ENCODE measurements at regions of chr16 and their contacts with region 1.

Region 1: DNA sequence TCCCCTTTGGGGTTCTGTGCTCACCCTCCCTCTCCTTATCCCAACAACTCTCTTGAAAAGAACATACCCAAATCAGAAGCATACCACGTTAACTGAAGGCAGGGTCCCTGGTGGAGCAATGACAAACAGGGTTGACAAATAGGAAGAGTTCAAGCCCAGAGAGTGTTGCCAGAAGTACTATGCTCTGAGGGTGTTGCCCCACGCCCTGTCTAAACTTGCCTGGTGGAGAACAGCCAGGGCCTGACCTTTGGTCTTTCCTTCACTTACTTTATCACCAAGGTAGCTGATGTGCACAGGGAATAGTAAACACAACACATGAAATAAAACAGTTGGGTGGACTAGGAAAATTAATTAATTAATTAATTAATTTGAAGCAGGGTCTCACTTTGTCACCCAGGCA is 23.3 kb downstream of the ZNF75A start:
- DNase-seq: no peak
- ATAC-seq: no peak
- H3K4me3 ChIP-seq: no peak overlapping the region
- H3K4me3 Mint-ChIP-seq: no peak overlapping the region
- H3K27ac ChIP-seq: no peak overlapping the region
- H3K27ac Mint-ChIP-seq: no peak overlapping the region
- H3K4me1 ChIP-seq: no peaks in the 10 kb centered on the region
- H3K4me1 Mint-ChIP-seq: no peaks in the 10 kb centered on the region
- H3K27me3 ChIP-seq: no peaks in the 10 kb centered on the region
- H3K27me3 Mint-ChIP-seq: no peaks in the 10 kb centered on the region

Region 2: GRCh38 chr16:3198334-3199072 is 130.1 kb before region 1 on chr16:
- CTCF ChIA-PET with region 1: no interaction called
- POLR2A ChIA-PET with region 1: interaction called in 1 of 2 experiments, 11 read pairs
- DNase-seq: no peak
- ATAC-seq: no peak
- H3K4me3 ChIP-seq: no peak overlapping the region
- H3K4me3 Mint-ChIP-seq: no peak overlapping the region
- H3K27ac ChIP-seq: no peak overlapping the region
- H3K27ac Mint-ChIP-seq: no peak overlapping the region
- H3K4me1 ChIP-seq: no peaks in the 10 kb centered on the region
- H3K4me1 Mint-ChIP-seq: peaks cover 0 to 9% (median 6%) of the 10 kb centered on the region in 3 donors
- H3K27me3 ChIP-seq: peaks cover 4 to 40% of the 10 kb centered on the region in 2 experiments
- H3K27me3 Mint-ChIP-seq: peaks cover 17 to 38% of the 10 kb centered on the region in 2 donors

Region 3: DNA sequence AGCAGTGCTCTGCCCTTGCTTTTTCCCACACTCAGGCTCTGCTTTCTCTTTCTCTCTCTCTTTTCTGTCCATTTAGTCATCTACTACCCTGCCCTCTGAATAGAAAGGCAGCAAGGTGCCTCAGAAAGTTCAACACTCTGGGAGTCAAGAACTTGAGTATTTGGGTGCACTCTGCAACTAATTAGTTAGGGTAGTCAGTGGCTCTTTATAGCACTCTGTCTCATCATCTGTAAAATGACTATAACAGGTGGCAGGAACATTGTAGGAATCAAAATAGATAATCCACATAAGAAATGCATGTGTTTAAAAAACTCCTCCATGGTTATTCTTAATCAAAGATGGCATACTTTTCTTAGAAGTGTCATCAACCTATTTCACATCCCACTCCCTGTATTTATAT is 34.3 kb after region 1 on chr16:
- CTCF ChIA-PET with region 1: interaction called in 1 of 2 experiments, 11 read pairs
- POLR2A ChIA-PET with region 1: no interaction called
- DNase-seq: no peak
- ATAC-seq: no peak
- H3K4me3 ChIP-seq: no peak overlapping the region
- H3K4me3 Mint-ChIP-seq: no peak overlapping the region
- H3K27ac ChIP-seq: no peak overlapping the region
- H3K27ac Mint-ChIP-seq: no peak overlapping the region
- H3K4me1 ChIP-seq: peaks cover 0 to 14% of the 10 kb centered on the region in 2 experiments
- H3K4me1 Mint-ChIP-seq: peaks cover 11 to 14% (median 14%) of the 10 kb centered on the region in 3 donors
- H3K27me3 ChIP-seq: peaks cover 2 to 12% of the 10 kb centered on the region in 2 experiments
- H3K27me3 Mint-ChIP-seq: peaks cover 23 to 28% of the 10 kb centered on the region in 2 donors